ENCODE measurements at regions of chr6 and their contacts with region 1.

Region 1: GRCh38 chr6:35920793-35921732 is at the start of gene SRPK1:
- DNase-seq: peak; percentile 68 to 76 (median 74)
- H3K4me3 ChIP-seq: peak within 1 kb of the TSS; percentile 73 to 97 (median 96)
- H3K4me3 Mint-ChIP-seq: peak within 1 kb of the TSS; percentile 99
- H3K27ac ChIP-seq: peak within 1 kb of the TSS; percentile 61 to 90
- H3K27ac Mint-ChIP-seq: peak within 1 kb of the TSS; percentile 76 to 98 (median 94)
- H3K4me1 ChIP-seq: peaks cover 32 to 41% of the 10 kb centered on the region in 2 donors
- H3K4me1 Mint-ChIP-seq: peaks cover 35% of the 10 kb centered on the region
- H3K27me3 ChIP-seq: no peaks in the 10 kb centered on the region
- H3K27me3 Mint-ChIP-seq: peaks cover 0 to 5% (median 3%) of the 10 kb centered on the region in 3 donors
- CTCF ChIP-seq: no peak
- polyA plus RNA-seq, gene SRPK1: 7.2 to 24.8 (median 20.5) TPM

Region 2: DNA sequence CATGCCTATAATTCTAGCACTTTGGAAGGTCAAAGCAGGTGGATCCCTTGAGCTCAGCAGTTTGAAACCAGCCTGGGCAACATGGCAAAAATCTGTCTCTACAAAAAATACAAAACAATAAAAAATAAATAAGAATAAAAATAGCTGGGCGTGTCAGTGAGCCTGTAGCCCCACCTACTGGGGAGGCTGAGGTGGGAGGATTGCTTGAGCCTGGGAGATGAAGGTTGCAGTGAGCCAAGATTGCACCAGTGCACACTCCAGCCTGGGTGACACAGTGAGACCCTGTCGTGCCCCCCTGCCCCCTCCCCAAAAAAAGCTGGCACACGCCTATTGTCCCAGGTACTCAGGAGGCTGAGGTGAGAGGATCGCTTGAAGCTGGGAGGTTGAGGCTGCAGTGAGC is 34.9 kb after region 1 on chr6:
- intact Hi-C with region 1: no loop called
- DNase-seq: no peak
- H3K4me3 ChIP-seq: no peak overlapping the region
- H3K4me3 Mint-ChIP-seq: no peak overlapping the region
- H3K27ac ChIP-seq: no peak overlapping the region
- H3K27ac Mint-ChIP-seq: peak overlapping the region in 1 of 7 donors; percentile 8
- H3K4me1 ChIP-seq: peaks cover 0 to 7% of the 10 kb centered on the region in 2 donors
- H3K4me1 Mint-ChIP-seq: peaks cover 14% of the 10 kb centered on the region
- H3K27me3 ChIP-seq: no peaks in the 10 kb centered on the region
- H3K27me3 Mint-ChIP-seq: peaks cover 0 to 2% (median 0%) of the 10 kb centered on the region in 3 donors
- CTCF ChIP-seq: peak; percentile 21

Region 3: DNA sequence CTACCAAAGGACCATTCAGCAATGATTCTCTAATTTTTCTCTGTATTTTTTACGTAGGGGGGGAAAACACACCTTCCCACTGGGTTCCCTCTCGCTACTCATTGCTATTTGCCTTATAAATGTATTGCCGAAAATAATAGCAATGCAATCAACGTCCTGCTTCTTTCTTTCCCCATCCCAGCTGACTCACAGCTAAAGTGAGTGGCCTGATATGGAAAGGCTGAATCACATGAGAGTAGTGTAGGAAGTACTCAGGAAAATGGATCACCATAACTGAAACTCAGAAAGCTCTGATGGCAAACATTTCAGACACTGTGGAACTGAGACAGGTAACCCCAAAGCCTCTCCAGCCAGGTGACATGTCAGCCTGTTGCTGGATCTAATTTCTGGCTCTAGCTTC is 49.1 kb after region 1 on chr6:
- intact Hi-C with region 1: no loop called
- DNase-seq: no peak
- H3K4me3 ChIP-seq: no peak overlapping the region
- H3K4me3 Mint-ChIP-seq: no peak overlapping the region
- H3K27ac ChIP-seq: no peak overlapping the region
- H3K27ac Mint-ChIP-seq: no peak overlapping the region
- H3K4me1 ChIP-seq: peaks cover 0 to 2% of the 10 kb centered on the region in 2 donors
- H3K4me1 Mint-ChIP-seq: peaks cover 7% of the 10 kb centered on the region
- H3K27me3 ChIP-seq: no peaks in the 10 kb centered on the region
- H3K27me3 Mint-ChIP-seq: peaks cover 0 to 2% (median 0%) of the 10 kb centered on the region in 3 donors
- CTCF ChIP-seq: no peak

Region 4: DNA sequence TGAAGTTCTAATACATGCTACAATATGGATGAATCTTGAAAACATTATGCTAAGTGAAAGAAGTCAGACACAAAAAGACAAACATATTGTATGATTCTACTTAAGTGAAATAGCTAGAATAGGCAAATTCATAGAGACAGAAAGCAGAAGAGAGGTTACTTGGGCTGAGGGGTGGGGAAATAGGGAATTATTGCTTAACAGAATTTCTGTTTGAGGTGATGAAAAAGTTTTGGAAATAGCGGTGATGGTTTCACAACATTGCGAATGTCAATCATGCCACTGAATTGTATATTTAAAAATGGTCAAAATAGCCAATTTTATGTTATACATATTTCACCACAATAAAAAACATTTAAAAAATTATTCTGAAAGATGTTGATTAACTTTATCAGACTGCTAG is 97.3 kb after region 1 on chr6:
- intact Hi-C with region 1: loop called in 1 of 2 experiments (anchors 10 kb)
- DNase-seq: peak; percentile 67 to 86 (median 78)
- H3K4me3 ChIP-seq: peak overlapping the region in 1 of 3 experiments; percentile 43
- H3K4me3 Mint-ChIP-seq: peak overlapping the region in 1 of 2 donors; percentile 63
- H3K27ac ChIP-seq: peak overlapping the region; percentile 73 to 75
- H3K27ac Mint-ChIP-seq: peak overlapping the region; percentile 80 to 95 (median 91)
- H3K4me1 ChIP-seq: peaks cover 40 to 53% of the 10 kb centered on the region in 2 donors
- H3K4me1 Mint-ChIP-seq: peaks cover 58% of the 10 kb centered on the region
- H3K27me3 ChIP-seq: no peaks in the 10 kb centered on the region
- H3K27me3 Mint-ChIP-seq: peaks cover 0 to 1% (median 0%) of the 10 kb centered on the region in 3 donors
- CTCF ChIP-seq: no peak

Measured in CD14-positive monocyte (primary cell).